PC-3 (cell line): ENCODE measurements at regions of chr4 and their contacts with region 1.

Region 1: DNA sequence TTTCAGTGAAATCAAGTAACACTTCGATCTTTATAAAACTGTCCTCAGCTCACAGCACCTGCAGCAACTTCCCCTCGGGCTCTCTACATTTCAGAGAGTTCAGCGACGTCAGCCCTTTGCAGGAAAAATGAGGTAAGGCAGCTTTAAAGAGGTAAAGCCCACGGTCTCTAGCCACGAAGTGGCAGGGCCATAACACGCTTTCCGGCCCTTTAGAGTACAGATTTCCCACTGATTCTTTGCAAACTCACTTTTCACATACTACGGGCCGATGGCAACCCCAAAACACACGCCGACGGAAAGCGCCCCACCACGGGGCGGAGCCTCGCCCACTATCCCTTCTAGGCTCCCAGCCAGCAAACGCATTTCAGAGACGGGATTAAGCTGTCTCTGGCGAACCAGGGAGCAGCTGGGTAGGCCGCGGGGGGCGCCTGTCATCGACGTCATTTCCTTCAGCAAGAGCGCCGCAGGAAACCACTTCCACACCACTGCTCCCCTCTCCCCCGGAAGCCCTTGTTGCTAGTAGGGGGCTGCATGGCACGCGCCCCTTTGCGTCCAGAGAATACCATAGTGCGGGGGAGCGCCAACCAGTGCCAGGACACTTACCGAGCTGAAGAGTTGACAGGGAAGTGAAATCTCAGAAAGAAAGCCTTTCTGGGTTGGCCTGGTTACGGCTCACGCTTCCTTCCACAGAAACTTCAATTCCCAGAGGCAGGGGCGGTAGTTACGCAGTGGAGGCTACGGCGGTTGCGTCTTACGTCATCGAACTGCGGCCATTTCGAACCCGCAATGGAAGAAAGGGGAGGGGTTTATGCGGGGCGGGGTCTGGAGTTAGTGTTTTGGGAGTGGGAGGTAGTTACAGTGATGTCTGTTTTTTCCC is at the start of gene TRMT10A:
- DNase-seq: peak; percentile 91
- ATAC-seq: peak; percentile 96
- H3K4me3 ChIP-seq: peak within 1 kb of the TSS; percentile 90
- H3K27ac ChIP-seq: peak within 1 kb of the TSS; percentile 83
- H3K4me1 ChIP-seq: peaks cover 9% of the 10 kb centered on the region; the same call in 1 of the 2 replicates
- H3K27me3 ChIP-seq: no peaks in the 10 kb centered on the region
- CTCF ChIP-seq: no peak
- total RNA-seq, gene TRMT10A: 5.2 and 20.3 TPM in 2 replicates

Region 2: DNA sequence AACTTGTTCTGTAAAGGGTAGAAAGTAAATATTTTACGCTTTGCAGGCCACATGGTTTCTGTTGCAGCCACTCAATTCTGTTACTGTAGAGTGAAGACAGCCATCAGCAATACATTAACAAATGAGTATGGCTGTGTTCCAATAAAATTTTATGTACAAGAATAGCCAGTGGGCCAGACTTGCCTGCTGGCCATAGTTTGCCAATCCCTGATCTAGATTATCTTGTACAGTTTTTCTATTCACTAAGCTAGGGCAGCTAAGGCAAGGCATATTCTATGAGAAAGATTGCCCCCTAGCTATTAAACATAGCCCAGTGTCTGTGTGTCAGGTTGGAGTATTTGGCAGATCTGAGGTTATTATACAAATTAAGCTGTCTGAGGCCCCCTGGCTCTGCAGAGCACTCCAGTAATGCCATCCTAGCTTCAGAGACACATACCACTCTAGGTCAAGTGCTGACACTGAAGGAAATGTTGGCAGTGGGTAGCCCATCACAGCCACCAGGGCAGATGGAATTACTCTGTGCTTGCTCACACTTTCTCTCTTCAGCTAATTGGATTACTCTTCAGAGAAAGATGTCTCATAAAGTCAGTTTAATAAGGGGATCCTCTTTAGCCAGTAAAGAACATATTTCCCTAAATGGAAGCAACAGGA is 51.7 kb after region 1 on chr4:
- CTCF ChIA-PET with region 1: no interaction called
- POLR2A ChIA-PET with region 1: no interaction called
- intact Hi-C with region 1: loop called (anchors 1 kb)
- DNase-seq: no peak
- ATAC-seq: no peak
- H3K4me3 ChIP-seq: no peak overlapping the region
- H3K27ac ChIP-seq: no peak overlapping the region
- H3K4me1 ChIP-seq: no peaks in the 10 kb centered on the region
- H3K27me3 ChIP-seq: no peaks in the 10 kb centered on the region
- CTCF ChIP-seq: no peak; the same call in 1 of the 2 replicates

Region 3: DNA sequence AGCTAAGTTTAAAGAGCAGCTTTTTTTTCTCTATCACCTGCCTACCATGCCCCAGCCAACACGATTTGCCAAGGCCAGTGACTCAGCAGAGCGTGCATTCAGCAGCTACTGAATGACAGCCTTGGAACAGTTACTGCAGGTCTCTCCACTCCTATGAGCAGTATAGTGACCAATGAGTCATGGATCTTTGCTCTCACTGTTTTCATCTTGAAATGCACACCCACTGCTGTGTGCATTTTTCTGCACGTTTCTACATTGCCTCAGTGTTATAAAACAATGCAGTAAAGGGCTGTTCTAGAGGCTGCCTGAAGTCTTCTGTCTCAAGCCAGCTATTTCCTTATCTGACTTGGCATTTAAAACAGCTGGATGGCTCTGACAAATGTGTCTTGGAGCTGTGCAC is 160.1 kb after region 1 on chr4:
- CTCF ChIA-PET with region 1: no interaction called
- POLR2A ChIA-PET with region 1: no interaction called
- intact Hi-C with region 1: loop called (anchors 5 kb)
- DNase-seq: peak; percentile 75
- ATAC-seq: peak; percentile 95
- H3K4me3 ChIP-seq: no peak overlapping the region
- H3K27ac ChIP-seq: peak overlapping the region; percentile 14; the same call in 1 of the 2 replicates
- H3K4me1 ChIP-seq: peaks cover 15% of the 10 kb centered on the region
- H3K27me3 ChIP-seq: no peaks in the 10 kb centered on the region
- CTCF ChIP-seq: no peak

Region 4: DNA sequence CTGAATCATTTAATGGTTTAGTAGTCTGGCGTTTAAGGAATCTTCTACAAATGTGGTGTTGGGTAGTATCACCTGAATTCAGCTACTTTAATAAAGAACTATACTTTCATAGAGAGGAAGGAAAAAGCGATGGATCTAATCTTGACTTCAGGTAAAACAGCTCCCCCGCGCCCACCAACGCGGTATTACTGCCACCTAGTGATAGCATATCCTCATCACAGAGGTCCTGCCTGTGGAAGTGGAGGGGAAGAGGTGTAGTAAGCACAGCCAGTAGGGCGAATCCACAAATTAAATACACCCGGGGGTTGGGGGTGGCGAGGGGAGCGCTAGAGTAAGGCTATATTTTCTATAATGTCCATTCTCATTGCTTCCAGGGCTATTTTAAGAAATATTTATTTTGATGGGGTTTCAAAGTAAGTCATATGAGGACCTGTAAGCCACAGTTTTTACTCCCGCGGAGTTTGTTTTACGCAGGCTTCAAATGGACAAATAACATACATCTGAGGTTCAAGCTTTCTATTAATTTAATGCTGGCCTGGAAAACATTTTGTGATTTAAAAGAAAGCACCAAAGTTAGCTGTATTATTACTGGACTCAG is 244.8 kb after region 1 on chr4:
- CTCF ChIA-PET with region 1: no interaction called
- POLR2A ChIA-PET with region 1: no interaction called
- intact Hi-C with region 1: loop called (anchors 1 kb)
- DNase-seq: peak; percentile 80
- ATAC-seq: peak; percentile 80
- H3K4me3 ChIP-seq: no peak overlapping the region
- H3K27ac ChIP-seq: no peak overlapping the region
- H3K4me1 ChIP-seq: no peaks in the 10 kb centered on the region
- H3K27me3 ChIP-seq: no peaks in the 10 kb centered on the region
- CTCF ChIP-seq: peak; percentile 85

Region 5: DNA sequence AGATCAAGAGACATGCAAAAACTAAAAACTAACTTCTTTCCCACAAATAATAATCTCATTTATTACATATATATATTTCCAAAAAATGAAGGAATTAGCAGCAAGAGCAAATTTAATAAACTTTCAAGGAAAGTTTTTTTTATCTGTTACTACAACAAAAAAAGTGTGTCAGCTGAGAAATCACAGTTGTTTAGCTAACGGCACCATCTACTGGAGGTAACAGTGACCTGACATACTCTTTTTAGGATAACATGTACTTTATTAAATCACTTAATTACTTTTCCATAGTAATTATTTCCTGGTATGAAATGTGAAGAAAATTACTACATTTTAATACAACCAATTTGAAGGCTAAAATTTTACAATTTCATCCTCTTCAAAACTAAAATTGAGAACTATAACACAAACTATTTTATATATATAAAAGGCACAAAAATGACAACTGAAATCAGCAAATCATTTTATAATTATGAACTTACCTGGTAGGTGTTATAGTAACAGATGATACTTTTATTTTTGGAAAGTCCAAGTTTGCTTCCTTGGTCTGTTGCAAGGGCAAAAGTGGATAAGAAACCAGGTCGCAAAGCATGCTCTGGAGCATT is 321.6 kb after region 1 on chr4:
- CTCF ChIA-PET with region 1: no interaction called
- POLR2A ChIA-PET with region 1: no interaction called
- intact Hi-C with region 1: loop called (anchors 1 kb)
- DNase-seq: peak; percentile 54
- ATAC-seq: no peak
- H3K4me3 ChIP-seq: no peak overlapping the region
- H3K27ac ChIP-seq: peak overlapping the region; percentile 58; the same call in 1 of the 2 replicates
- H3K4me1 ChIP-seq: peaks cover 13% of the 10 kb centered on the region
- H3K27me3 ChIP-seq: no peaks in the 10 kb centered on the region
- CTCF ChIP-seq: peak; percentile 69

Region 6: GRCh38 chr4:99949034-99949998 is 385.8 kb after region 1 on chr4:
- CTCF ChIA-PET with region 1: no interaction called
- POLR2A ChIA-PET with region 1: no interaction called
- intact Hi-C with region 1: loop called (anchors 2 kb)
- DNase-seq: peak; percentile 92
- ATAC-seq: peak; percentile 32
- H3K4me3 ChIP-seq: peak overlapping the region; percentile 96
- H3K27ac ChIP-seq: peak overlapping the region; percentile 63
- H3K4me1 ChIP-seq: peaks cover 33% of the 10 kb centered on the region
- H3K27me3 ChIP-seq: no peaks in the 10 kb centered on the region
- CTCF ChIP-seq: peak; percentile 70

Region 7: DNA sequence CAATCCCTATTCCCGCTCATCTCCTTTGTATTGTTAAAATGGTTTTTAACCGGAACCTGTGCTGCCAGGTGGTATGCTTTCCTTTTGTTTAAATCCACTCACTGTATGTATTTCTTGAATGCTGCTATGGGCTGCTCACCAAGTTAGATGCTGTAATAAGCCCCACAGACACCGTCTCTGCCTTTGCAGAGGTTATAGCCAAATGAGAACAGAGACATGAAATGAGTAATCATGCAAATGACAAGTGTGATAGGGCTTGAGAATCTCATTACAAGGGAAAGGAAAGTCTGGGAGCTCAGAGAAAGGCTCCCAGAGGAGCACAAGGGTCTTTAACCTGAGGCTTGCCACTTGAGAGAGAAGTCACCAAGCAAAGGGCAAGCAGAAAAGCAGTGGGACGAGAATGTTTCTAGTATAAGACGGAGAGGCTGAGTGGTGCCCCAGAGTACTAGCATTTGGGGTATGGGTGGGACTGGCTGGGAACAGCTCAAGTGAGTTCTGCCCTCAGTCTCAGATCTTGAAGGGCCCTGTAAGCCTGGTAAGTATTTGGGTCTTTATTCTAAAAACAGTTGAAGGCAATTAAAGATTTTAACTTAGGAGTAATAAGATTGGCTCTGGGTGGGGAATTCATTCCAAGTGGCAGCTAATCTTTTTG is 497.3 kb after region 1 on chr4:
- CTCF ChIA-PET with region 1: no interaction called
- POLR2A ChIA-PET with region 1: no interaction called
- intact Hi-C with region 1: loop called (anchors 5 kb)
- DNase-seq: no peak
- ATAC-seq: no peak
- H3K4me3 ChIP-seq: no peak overlapping the region
- H3K27ac ChIP-seq: no peak overlapping the region
- H3K4me1 ChIP-seq: peaks cover 25% of the 10 kb centered on the region
- H3K27me3 ChIP-seq: no peaks in the 10 kb centered on the region
- CTCF ChIP-seq: no peak